PC-9 (cell line): ENCODE measurements at regions of chr6 and their contacts with region 1.

Region 1: GRCh38 chr6:47097092-47097945 is 55.2 kb upstream of the ADGRF1 start:
- DNase-seq: peak; percentile 74 to 81
- H3K4me3 ChIP-seq: no peak overlapping the region
- H3K27ac ChIP-seq: peak overlapping the region; percentile 95
- H3K4me1 ChIP-seq: peaks cover 65% of the 10 kb centered on the region
- H3K27me3 ChIP-seq: no peaks in the 10 kb centered on the region
- CTCF ChIP-seq: peak; percentile 88

Region 2: DNA sequence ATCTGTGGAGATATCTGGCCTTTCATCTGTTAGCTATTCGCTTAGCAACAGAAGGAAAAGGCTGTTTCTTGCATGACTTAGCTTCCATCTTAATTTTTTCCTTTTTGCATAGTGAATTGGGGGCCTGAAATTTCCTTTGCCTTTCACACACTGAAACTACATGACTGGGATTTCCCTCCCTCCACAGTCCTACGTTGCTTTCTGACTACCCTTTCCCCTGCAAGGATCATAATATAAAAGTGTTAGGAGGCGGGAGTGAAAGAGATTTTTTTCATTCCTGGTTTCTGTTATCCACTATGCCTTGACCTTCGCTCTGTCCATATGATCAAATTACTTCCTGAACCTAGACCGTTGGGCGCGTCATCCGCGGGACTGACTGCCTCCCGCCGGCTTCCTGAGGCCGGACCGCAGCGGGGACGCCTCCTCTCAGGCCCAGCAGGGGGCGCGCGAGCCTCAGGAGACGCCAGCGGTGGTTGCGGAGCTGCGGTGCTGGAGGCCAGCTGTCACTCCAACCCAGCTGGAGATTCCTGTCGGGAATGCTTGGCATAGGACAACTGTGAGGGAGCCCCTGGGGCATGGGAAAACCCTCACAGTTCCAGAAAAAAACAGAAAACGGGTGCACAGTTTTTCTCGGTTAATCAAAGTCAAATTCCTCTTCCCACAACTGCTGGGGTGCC is 248.5 kb before region 1 on chr6:
- CTCF ChIA-PET with region 1: no interaction called
- POLR2A ChIA-PET with region 1: no interaction called
- intact Hi-C with region 1: loop called (anchors 5 kb)
- DNase-seq: peak; percentile 76 to 85
- H3K4me3 ChIP-seq: no peak overlapping the region
- H3K27ac ChIP-seq: 0 out of 2 replicates have a peak overlapping the region, but pooled peaks have one; percentile 12
- H3K4me1 ChIP-seq: peaks cover 37% of the 10 kb centered on the region
- H3K27me3 ChIP-seq: no peaks in the 10 kb centered on the region
- CTCF ChIP-seq: peak; percentile 96

Region 3: GRCh38 chr6:47047479-47048407 is 49.6 kb before region 1 on chr6:
- CTCF ChIA-PET with region 1: no interaction called
- POLR2A ChIA-PET with region 1: no interaction called
- intact Hi-C with region 1: loop called (anchors 2 kb)
- DNase-seq: peak; percentile 72 to 99
- H3K4me3 ChIP-seq: no peak overlapping the region; the same call in 1 of the 2 replicates
- H3K27ac ChIP-seq: peak overlapping the region; percentile 98
- H3K4me1 ChIP-seq: peaks cover 60% of the 10 kb centered on the region
- H3K27me3 ChIP-seq: no peaks in the 10 kb centered on the region
- CTCF ChIP-seq: peak; percentile 80

Region 4: GRCh38 chr6:47134476-47135189 is 37.3 kb after region 1 on chr6:
- CTCF ChIA-PET with region 1: interaction called, 3 read pairs
- POLR2A ChIA-PET with region 1: no interaction called
- intact Hi-C with region 1: loop called (anchors 1 kb)
- DNase-seq: peak; percentile 46 to 98
- H3K4me3 ChIP-seq: peak overlapping the region; percentile 43; the same call in 1 of the 2 replicates
- H3K27ac ChIP-seq: peak overlapping the region; percentile 100
- H3K4me1 ChIP-seq: peaks cover 73% of the 10 kb centered on the region
- H3K27me3 ChIP-seq: no peaks in the 10 kb centered on the region
- CTCF ChIP-seq: no peak

Region 5: GRCh38 chr6:47160702-47161101 is 63.4 kb after region 1 on chr6:
- CTCF ChIA-PET with region 1: no interaction called
- POLR2A ChIA-PET with region 1: interaction called, 10 read pairs
- intact Hi-C with region 1: no loop called
- DNase-seq: no peak
- H3K4me3 ChIP-seq: no peak overlapping the region
- H3K27ac ChIP-seq: peak overlapping the region; percentile 90
- H3K4me1 ChIP-seq: peaks cover 49% of the 10 kb centered on the region
- H3K27me3 ChIP-seq: no peaks in the 10 kb centered on the region
- CTCF ChIP-seq: no peak

Region 6: GRCh38 chr6:47209632-47210031 is 112.3 kb after region 1 on chr6:
- CTCF ChIA-PET with region 1: no interaction called
- POLR2A ChIA-PET with region 1: no interaction called
- intact Hi-C with region 1: no loop called
- DNase-seq: no peak
- H3K4me3 ChIP-seq: no peak overlapping the region
- H3K27ac ChIP-seq: no peak overlapping the region
- H3K4me1 ChIP-seq: peaks cover 7% of the 10 kb centered on the region; the same call in 1 of the 2 replicates
- H3K27me3 ChIP-seq: no peaks in the 10 kb centered on the region
- CTCF ChIP-seq: no peak

Region 7: DNA sequence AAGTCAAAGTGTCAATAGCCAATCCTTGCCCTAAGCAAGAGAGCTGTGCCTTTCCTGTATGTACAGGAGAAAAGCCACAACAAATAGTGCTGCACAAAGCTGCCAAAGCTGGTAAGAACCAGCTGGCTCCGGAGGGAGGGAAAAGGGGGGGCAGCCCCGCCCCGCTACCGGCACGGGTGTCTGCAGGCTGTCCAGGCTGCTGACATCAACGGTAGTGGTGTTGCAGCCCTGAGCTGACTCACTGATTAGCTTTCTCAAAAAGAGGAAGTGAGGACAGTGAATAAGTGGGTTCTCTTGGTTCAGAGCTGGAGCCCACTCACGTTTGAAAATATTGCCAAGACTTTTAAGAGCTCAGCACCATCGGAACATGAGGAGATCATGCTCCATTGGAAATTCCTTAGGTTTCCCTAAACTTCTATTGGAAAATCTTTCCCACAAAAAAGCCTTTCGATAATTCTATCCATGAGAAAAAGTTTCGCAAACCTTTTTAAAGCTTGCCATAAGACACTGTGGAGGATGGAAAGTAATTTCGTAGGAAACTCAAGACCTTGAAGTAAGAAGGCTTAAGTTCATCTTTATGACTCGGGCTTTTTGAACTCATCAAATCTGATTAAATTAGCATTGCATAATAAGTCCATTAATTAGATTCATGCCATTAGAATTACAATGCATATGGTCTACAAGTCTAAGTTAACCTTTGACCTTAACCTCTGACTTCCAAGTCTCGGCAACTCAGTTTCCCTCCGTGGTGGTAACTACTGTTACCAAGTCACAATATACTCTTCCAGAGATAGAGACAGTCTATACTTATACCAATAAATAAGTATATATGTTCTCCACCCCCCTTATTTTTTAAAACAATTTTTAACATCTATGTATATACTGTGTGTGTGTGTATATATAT is 145.4 kb after region 1 on chr6:
- CTCF ChIA-PET with region 1: no interaction called
- POLR2A ChIA-PET with region 1: no interaction called
- intact Hi-C with region 1: loop called (anchors 1 kb)
- DNase-seq: peak; percentile 85 to 86
- H3K4me3 ChIP-seq: peak overlapping the region; percentile 14; the same call in 1 of the 2 replicates
- H3K27ac ChIP-seq: peak overlapping the region; percentile 85
- H3K4me1 ChIP-seq: peaks cover 87% of the 10 kb centered on the region
- H3K27me3 ChIP-seq: no peaks in the 10 kb centered on the region
- CTCF ChIP-seq: no peak

Region 8: DNA sequence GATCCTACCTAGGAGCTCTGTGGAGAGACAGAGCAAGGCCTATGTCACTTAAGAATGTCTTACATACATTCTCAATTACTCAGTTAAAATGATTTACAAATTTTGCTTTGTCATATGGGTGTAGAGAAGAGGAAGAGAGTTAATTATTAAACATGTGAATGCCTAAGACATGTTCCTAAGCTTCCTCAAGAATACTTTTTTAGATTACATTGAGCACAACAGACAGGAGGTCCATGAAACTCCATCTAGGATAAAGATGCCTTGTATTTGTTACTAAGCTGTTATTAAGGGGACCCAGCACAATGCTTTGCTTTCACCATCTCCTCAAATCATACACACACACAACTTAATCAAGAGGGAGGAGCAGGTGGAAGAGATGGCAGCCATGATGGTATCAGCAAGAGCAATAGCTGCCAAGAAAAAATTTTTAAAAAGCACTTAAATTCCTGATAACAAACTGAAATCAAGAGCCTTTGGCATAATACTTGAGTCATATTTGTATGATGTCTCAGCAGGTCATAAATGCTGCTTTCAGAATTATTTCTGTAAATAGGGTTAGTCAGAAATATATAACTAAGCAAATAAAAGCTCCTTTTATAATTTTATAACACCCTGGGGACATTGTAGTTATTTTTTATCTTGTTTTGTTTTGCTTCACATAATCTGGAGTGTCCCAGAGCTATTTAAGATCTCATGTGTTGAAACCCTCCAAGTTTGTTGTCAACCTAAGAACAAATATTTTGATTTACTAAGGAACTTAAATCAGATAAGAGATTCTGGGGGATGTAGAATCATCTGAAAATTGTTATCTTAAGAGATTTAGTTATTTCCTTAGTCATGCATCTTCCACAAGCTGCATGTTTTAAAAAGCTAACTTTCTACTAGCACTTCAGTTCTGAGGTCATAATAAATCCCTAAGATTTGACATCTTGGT is 310.3 kb after region 1 on chr6:
- CTCF ChIA-PET with region 1: interaction called, 8 read pairs
- POLR2A ChIA-PET with region 1: no interaction called
- intact Hi-C with region 1: loop called (anchors 10 kb)
- DNase-seq: peak in 1 of 2 experiments; percentile 98
- H3K4me3 ChIP-seq: no peak overlapping the region
- H3K27ac ChIP-seq: peak overlapping the region; percentile 92
- H3K4me1 ChIP-seq: peaks cover 58% of the 10 kb centered on the region
- H3K27me3 ChIP-seq: no peaks in the 10 kb centered on the region
- CTCF ChIP-seq: no peak